ENCODE measurements at regions of chr4 and their contacts with region 1.

Region 1: DNA sequence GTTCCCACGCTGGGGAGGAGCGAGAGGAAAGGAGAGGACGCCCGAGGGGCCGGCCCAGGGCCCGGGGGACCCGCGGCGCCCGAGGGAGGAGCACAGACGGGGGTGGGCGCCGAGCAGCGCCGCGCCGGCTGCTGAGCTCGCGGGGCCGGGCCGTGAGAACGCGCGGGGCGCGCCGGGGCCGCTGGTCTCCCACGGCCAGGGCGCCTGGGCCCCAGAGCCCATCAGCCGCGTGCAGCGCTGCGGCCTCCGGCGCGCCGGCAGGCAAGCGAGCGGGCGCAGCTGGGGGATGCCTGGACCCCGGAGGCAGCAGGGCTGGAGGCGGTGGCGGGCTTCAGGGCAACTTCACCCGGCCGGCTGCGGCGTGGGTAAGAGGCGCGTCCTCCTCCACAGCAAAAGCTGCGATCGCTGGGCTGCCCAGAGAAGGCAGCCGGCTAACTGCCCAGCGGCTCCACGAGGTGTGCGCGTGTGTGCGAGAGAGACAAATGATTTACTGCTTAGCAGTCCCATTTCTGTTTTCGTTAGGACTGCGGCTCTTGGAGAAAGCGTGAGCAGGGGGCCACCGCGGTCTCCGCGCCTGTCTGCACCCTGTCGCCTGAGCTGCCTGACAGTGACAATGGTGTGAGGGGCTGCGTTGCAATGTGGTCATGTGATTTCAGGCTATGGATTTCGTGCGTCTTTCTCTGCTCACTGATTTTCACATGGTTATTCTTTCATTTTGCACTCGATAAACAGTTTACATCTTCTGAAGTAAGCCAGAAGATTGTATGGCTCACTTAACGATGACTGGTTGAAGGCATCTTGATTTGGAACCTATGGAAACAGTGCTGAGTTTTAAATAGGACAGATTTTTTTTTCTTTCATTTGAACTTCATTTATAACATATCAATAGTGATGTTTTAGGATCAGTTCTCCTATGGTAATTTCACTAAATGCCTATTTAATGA is 1.2 kb downstream of the GUCY1A1 start:
- DNase-seq: peak in 1 of 2 donors; percentile 33
- ATAC-seq: peak; percentile 72 to 93 (median 84)
- H3K4me3 ChIP-seq: peak overlapping the region; percentile 51 to 85 (median 74)
- H3K27ac ChIP-seq: peak overlapping the region; percentile 88 to 95 (median 92)
- H3K4me1 ChIP-seq: peaks cover 0 to 43% (median 17%) of the 10 kb centered on the region in 9 donors
- H3K27me3 ChIP-seq: peaks cover 0 to 31% (median 0%) of the 10 kb centered on the region in 7 donors
- CTCF ChIP-seq: no peak

Region 2: DNA sequence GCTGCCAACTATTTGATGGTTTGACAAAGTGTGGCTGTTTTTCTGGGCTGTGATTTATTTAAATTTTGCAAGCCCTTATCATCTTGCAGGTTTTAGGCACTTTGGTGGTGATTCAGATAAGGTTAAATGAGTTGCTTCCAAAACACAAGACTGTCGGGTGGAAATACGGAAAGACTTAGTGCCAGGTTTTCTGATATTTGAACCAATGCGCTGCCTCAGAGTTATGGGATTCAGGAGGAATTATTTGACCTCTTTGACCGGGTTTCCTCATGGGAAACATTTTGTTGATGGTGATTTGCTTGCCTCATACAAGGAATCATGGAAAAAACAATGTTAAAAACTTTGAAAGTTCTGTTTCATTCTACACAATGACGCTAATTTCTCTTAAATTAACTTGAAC is 155.0 kb before region 1 on chr4:
- intact Hi-C with region 1: loop called in 3 of 10 experiments (anchors 5 to 10 kb)
- DNase-seq: peak in 1 of 2 donors; percentile 82
- ATAC-seq: peak; percentile 52 to 81 (median 76)
- H3K4me3 ChIP-seq: no peak overlapping the region
- H3K27ac ChIP-seq: peak overlapping the region in 9 of 10 donors; percentile 28 to 85 (median 68)
- H3K4me1 ChIP-seq: peaks cover 0 to 74% (median 39%) of the 10 kb centered on the region in 9 donors
- H3K27me3 ChIP-seq: no peaks in the 10 kb centered on the region
- CTCF ChIP-seq: no peak

Region 3: GRCh38 chr4:155569960-155570515 is 97.8 kb before region 1 on chr4:
- intact Hi-C with region 1: loop called in 2 of 10 experiments (anchors 5 kb)
- DNase-seq: no peak
- ATAC-seq: no peak
- H3K4me3 ChIP-seq: no peak overlapping the region
- H3K27ac ChIP-seq: no peak overlapping the region
- H3K4me1 ChIP-seq: peaks cover 0 to 22% (median 10%) of the 10 kb centered on the region in 9 donors
- H3K27me3 ChIP-seq: no peaks in the 10 kb centered on the region
- CTCF ChIP-seq: no peak

Region 4: GRCh38 chr4:155705664-155706063 is 37.8 kb after region 1 on chr4:
- intact Hi-C with region 1: loop called in 1 of 10 experiments (anchors 5 kb)
- DNase-seq: no peak
- ATAC-seq: peak in 7 of 8 donors; percentile 49 to 89 (median 67)
- H3K4me3 ChIP-seq: no peak overlapping the region
- H3K27ac ChIP-seq: peak overlapping the region in 4 of 10 donors; percentile 8 to 34 (median 19)
- H3K4me1 ChIP-seq: peaks cover 0 to 54% (median 21%) of the 10 kb centered on the region in 9 donors
- H3K27me3 ChIP-seq: no peaks in the 10 kb centered on the region
- CTCF ChIP-seq: no peak

Region 5: DNA sequence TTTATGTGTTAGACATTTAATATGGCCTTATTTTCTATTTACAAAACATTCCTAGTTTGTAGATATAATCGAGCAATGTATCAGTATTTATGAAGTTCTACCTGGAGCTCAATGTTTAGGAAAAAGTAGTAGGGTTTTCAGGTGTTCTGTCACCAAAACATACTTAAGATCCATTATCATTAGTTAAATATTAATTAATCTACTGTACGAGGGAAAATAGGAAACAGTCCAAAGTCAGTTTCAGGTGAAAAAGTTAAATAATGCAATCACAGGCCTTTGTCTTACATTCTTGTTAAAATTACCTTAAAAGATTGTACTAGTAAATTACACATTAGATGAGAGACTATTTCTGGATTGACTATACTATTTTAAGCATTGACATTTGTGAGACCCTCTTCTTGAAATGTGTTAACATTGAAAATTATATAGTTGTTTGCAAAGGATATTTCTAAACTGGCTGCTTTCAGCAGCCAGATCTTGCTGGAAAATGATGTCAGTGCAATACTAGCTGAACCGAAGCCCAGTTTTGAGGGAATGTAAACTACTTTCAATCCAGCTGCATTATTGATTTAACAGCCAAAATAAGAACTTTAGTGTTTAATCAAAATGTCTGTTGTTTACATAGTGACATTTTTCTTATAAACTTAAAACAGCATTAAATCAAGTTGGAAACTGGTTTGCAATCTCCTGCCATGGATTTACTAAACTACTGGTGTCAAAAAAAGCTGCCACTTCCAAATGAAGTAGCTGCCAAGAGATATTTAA is 110.3 kb after region 1 on chr4:
- intact Hi-C with region 1: loop called in 3 of 10 experiments (anchors 10 kb)
- DNase-seq: no peak
- ATAC-seq: peak in 3 of 8 donors; percentile 46 to 54 (median 51)
- H3K4me3 ChIP-seq: no peak overlapping the region
- H3K27ac ChIP-seq: peak overlapping the region in 6 of 10 donors; percentile 8 to 52 (median 27)
- H3K4me1 ChIP-seq: peaks cover 0 to 29% (median 16%) of the 10 kb centered on the region in 9 donors
- H3K27me3 ChIP-seq: no peaks in the 10 kb centered on the region
- CTCF ChIP-seq: no peak

Measured in heart right ventricle (tissue), 16 donors.